Activated CD8-positive, alpha-beta T cell treated with anti-CD3 and anti-CD28 coated beads, Interleukin-2, amount 10 ng/mL, durations not matched to agents 7 days and 5 days (primary cell): ENCODE measurements at regions of chr17 and their contacts with region 1.

Region 1: DNA sequence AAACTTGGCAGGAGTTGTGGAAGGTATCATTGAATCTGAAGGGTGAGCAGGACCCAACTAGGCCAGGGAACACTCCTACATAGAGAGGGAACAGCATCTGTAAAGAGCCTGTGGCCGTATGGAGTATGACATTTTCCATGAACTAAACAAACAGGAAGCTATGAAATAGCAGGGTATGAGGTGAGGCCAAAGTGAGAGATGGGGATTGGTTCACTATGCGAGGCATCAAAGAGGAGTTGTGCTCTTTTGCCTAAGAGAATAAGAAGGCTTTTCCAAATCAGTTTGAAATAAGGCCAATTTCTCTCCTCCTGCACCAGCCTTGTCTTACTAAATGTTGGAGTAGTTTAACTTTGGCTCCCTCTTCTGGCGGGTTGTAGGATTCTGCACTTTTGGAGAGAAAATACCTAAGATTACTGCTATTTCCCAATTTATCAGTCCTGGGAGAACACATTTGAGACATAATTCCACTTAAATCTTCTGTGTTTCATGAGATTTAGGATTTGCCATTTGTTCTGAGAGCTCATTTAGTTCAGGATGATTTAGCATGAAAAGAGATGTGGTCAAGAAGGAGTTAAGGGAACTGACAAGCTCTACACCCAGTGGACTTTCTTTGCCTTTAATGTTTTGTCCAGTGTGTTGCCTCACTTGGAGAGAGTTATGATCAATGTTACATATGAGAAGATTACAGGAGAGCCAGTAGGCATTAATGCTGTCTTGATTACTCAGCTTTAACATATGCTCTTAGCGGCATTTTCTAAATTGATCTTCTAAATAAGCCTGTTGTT is 55.4 kb downstream of the TNRC6C start:
- DNase-seq: peak; percentile 74
- ATAC-seq: peak; percentile 65
- H3K4me3 Mint-ChIP-seq: no peak overlapping the region
- H3K27ac Mint-ChIP-seq: no peak overlapping the region
- H3K4me1 Mint-ChIP-seq: peaks cover 17% of the 10 kb centered on the region
- H3K27me3 Mint-ChIP-seq: no peaks in the 10 kb centered on the region

Region 2: DNA sequence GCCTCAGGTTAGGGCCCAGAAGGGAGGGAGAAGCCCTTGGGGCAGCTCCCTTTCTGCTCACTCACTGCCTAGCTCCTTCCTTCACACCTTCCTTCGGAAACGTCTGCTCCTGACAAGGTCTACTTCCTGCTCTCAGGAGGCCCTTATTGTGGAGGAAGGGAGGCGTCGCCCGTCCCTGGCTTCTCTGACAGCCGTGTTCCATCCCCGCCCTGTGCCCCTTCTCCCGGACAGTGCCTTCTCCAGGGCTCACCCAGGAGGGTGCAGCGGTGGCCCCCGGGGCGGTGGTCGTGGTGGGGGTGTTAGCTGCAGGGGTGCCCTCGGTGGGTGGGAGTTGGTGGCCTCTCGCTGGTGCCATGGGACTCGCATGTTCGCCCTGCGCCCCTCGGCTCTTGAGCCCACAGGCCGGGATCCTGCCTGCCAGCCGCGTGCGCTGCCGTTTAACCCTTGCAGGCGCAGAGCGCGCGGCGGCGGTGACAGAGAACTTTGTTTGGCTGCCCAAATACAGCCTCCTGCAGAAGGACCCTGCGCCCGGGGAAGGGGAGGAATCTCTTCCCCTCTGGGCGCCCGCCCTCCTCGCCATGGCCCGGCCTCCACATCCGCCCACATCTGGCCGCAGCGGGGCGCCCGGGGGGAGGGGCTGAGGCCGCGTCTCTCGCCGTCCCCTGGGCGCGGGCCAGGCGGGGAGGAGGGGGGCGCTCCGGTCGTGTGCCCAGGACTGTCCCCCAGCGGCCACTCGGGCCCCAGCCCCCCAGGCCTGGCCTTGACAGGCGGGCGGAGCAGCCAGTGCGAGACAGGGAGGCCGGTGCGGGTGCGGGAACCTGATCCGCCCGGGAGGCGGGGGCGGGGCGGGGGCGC is 641.2 kb before region 1 on chr17:
- CTCF ChIA-PET with region 1: no interaction called
- POLR2A ChIA-PET with region 1: no interaction called
- DNase-seq: peak; percentile 83
- ATAC-seq: peak; percentile 49
- H3K4me3 Mint-ChIP-seq: peak overlapping the region; percentile 79
- H3K27ac Mint-ChIP-seq: peak overlapping the region; percentile 88
- H3K4me1 Mint-ChIP-seq: peaks cover 56% of the 10 kb centered on the region
- H3K27me3 Mint-ChIP-seq: peaks cover 4% of the 10 kb centered on the region

Region 3: DNA sequence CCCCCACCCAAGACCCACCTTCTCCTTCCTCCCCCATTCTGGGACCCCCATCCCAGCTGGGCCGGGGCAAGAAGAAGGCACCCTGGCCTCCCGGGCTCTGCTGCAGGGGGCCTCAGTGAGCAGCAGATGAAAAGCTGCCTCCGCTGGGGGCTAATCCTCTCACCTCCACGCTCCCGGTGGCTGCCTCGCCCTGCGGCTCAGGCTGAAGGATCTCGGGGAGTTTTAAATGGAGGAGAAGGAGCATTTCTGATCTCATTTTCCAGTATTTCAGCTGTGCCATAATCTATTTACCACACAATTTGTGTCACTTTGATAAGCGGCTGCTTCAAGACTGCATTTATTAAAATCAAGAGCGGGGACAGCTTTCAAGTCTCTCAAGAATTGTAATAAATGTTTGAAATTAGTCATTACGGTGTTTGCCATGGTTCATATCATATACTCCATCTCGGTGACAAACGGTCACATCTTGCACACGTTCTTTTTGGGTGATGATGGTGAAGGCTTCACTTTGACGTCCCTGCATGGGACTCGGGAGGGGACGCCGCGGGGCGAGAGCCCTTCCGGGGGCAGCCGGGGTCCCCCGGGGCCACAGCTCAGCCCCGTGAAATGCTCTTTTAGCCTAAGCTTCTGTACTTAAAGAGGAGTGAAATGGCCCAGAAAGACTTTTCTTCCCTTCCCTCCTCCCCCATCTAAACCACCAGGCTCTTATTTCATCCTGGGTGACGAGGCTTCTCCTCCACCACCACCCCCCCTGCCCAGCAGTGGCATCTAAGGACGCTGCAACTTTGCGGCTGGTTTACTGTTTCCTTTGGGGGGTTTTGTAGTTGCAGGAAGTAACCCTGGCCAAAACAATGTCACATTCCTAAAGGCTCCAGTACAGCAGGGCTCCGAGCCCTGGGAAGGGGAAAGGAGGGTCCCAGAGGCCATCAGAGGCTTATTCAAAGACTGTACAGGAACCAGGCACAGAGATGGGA is 368.5 kb before region 1 on chr17:
- CTCF ChIA-PET with region 1: interaction called, 12 read pairs
- POLR2A ChIA-PET with region 1: interaction called, 4 read pairs
- DNase-seq: peak; percentile 76
- ATAC-seq: peak; percentile 76
- H3K4me3 Mint-ChIP-seq: peak overlapping the region; percentile 54
- H3K27ac Mint-ChIP-seq: peak overlapping the region; percentile 82
- H3K4me1 Mint-ChIP-seq: peaks cover 37% of the 10 kb centered on the region
- H3K27me3 Mint-ChIP-seq: peaks cover 10% of the 10 kb centered on the region

Region 4: DNA sequence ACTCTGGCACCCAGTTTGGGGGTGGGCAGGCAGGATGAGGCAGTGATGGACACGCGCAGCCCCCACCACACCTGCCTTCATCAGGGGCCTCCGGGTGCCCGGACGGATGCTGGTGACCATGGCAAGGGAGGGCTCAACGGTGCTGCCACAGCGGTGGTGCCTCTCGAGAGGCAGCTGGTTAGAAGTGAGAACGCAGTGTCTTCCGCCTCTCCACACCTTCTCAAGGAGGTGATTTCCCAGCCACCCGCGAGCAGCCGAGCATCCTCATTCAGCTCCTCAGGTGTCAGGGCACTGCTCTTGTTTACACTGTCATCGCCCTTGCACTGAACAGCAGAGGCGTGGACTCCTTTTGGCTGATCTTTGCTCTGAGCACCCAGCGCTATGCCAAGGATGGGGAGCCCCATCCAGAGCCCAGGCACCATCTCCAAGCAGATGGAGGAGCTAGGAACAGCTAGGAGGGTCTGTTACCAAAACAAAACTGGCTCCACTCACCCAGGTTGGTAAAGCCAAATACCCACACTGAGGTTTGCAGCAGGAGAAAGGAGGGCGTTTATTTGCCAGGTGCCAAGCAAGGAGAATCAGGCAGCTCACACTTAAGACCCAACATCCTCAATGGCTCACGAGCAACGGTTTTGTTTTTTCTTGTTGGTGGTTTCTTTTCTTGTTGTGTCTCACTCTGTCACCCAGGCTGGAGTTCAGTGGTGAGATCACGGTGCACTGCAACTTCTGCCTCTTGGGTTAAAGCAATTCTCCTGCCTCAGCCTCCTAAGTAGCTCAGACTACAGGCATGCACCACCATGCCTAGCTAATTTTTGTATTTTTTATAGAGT is 229.7 kb before region 1 on chr17:
- CTCF ChIA-PET with region 1: interaction called, 11 read pairs
- POLR2A ChIA-PET with region 1: no interaction called
- DNase-seq: peak; percentile 61
- ATAC-seq: peak; percentile 91
- H3K4me3 Mint-ChIP-seq: peak overlapping the region; percentile 27
- H3K27ac Mint-ChIP-seq: peak overlapping the region; percentile 80
- H3K4me1 Mint-ChIP-seq: peaks cover 18% of the 10 kb centered on the region
- H3K27me3 Mint-ChIP-seq: peaks cover 3% of the 10 kb centered on the region

Region 5: DNA sequence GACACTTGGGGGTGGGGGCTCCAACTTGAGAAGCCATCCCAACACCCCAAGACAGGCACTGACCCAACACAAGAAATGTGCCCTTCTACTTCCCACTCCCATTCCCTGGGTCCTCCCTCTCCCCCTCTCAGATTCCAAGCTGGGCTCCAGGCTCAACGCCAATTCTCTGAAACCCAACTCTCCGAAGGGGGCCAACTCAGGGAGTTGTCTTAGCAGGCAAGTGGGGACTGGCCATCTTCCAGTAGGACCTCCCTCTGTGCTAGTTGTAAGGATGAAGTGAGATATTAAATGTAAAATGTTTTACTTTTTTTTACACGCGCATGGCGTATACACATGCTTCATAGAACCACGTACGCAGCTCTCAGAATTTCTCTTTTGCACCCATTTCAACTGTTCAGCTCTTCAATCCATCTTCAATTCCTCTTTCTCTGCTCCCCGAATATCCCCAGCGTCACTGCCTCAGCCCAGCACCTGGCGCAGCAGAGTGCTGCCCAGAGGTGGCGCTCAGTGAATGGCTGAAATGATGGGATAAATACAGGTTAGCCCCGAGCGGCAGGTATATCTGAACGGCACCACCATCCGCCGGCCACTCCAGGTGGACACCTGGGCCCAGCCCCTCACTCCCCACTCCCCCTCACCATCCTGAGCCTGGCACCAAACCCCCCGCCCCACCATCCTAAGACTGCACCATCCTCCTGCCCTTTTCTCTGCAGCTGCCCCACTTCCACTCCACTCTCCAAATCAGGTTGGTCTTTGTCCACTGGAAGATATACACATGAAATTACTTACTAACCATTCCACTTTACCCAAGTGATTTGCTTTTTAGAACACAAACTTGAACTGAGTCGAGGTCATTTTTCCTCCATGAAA is 99.3 kb before region 1 on chr17:
- CTCF ChIA-PET with region 1: interaction called, 12 read pairs
- POLR2A ChIA-PET with region 1: no interaction called
- DNase-seq: no peak
- ATAC-seq: no peak
- H3K4me3 Mint-ChIP-seq: no peak overlapping the region
- H3K27ac Mint-ChIP-seq: no peak overlapping the region
- H3K4me1 Mint-ChIP-seq: peaks cover 7% of the 10 kb centered on the region
- H3K27me3 Mint-ChIP-seq: peaks cover 66% of the 10 kb centered on the region

Region 6: GRCh38 chr17:77963441-77963840 is 50.4 kb before region 1 on chr17:
- CTCF ChIA-PET with region 1: interaction called, 20 read pairs
- POLR2A ChIA-PET with region 1: interaction called, 8 read pairs
- DNase-seq: peak; percentile 45
- ATAC-seq: peak; percentile 8
- H3K4me3 Mint-ChIP-seq: no peak overlapping the region
- H3K27ac Mint-ChIP-seq: no peak overlapping the region
- H3K4me1 Mint-ChIP-seq: peaks cover 52% of the 10 kb centered on the region
- H3K27me3 Mint-ChIP-seq: no peaks in the 10 kb centered on the region

Region 7: GRCh38 chr17:78040440-78041385 is 26.8 kb after region 1 on chr17:
- CTCF ChIA-PET with region 1: interaction called, 31 read pairs
- POLR2A ChIA-PET with region 1: no interaction called
- DNase-seq: peak; percentile 33
- ATAC-seq: peak; percentile 86
- H3K4me3 Mint-ChIP-seq: peak overlapping the region; percentile 49
- H3K27ac Mint-ChIP-seq: peak overlapping the region; percentile 19
- H3K4me1 Mint-ChIP-seq: peaks cover 9% of the 10 kb centered on the region
- H3K27me3 Mint-ChIP-seq: no peaks in the 10 kb centered on the region

Region 8: GRCh38 chr17:78197147-78197832 is 183.4 kb after region 1 on chr17:
- CTCF ChIA-PET with region 1: no interaction called
- POLR2A ChIA-PET with region 1: no interaction called
- DNase-seq: no peak
- ATAC-seq: no peak
- H3K4me3 Mint-ChIP-seq: no peak overlapping the region
- H3K27ac Mint-ChIP-seq: no peak overlapping the region
- H3K4me1 Mint-ChIP-seq: peaks cover 4% of the 10 kb centered on the region
- H3K27me3 Mint-ChIP-seq: no peaks in the 10 kb centered on the region